ENCODE measurements at regions of chr9 and their contacts with region 1.

Region 1: GRCh38 chr9:99057665-99058625 is 47.0 kb upstream of the TGFBR1 start:
- DNase-seq: peak; percentile 84
- H3K4me3 ChIP-seq: no peak overlapping the region
- H3K27ac ChIP-seq: no peak overlapping the region
- H3K4me1 ChIP-seq: peaks cover 46% of the 10 kb centered on the region
- H3K27me3 ChIP-seq: peaks cover 2% of the 10 kb centered on the region
- CTCF ChIP-seq: no peak

Region 2: DNA sequence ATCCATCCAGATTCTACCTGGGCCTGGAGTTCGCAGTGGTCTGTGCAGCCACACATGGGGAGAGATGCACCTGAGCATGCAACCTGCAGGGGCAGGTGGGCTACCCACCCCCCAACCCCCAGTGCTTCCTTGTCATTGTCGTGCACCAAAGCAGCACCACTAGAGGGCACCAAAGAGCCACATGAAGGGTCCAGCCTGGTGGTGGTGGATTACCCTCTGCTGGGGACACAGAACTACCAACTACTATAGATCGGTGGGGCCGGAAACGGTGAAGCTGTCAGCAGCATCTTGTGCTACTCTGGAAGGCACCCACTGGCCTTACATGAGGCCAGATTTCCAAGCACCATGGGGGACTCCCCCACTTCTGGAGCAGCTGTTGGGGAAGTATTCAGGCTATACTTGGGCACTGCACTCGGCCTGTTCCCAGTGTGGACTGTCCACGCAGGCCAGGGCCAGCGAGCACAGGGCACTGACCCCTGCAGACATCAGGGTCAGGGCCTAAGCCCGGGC is 742.3 kb before region 1 on chr9:
- CTCF ChIA-PET with region 1: no interaction called
- dilution Hi-C with region 1: no loop called
- in situ Hi-C with region 1: no loop called
- intact Hi-C with region 1: no loop called
- DNase-seq: peak; percentile 60
- H3K4me3 ChIP-seq: no peak overlapping the region
- H3K27ac ChIP-seq: no peak overlapping the region
- H3K4me1 ChIP-seq: peaks cover 3% of the 10 kb centered on the region
- H3K27me3 ChIP-seq: no peaks in the 10 kb centered on the region
- CTCF ChIP-seq: peak; percentile 96 to 98

Region 3: GRCh38 chr9:99019790-99020331 is 38.1 kb before region 1 on chr9:
- CTCF ChIA-PET with region 1: no interaction called
- dilution Hi-C with region 1: no loop called
- in situ Hi-C with region 1: no loop called
- intact Hi-C with region 1: loop called (anchors 5 kb)
- DNase-seq: peak; percentile 88
- H3K4me3 ChIP-seq: no peak overlapping the region
- H3K27ac ChIP-seq: peak overlapping the region; percentile 60
- H3K4me1 ChIP-seq: peaks cover 11% of the 10 kb centered on the region
- H3K27me3 ChIP-seq: no peaks in the 10 kb centered on the region
- CTCF ChIP-seq: no peak

Region 4: DNA sequence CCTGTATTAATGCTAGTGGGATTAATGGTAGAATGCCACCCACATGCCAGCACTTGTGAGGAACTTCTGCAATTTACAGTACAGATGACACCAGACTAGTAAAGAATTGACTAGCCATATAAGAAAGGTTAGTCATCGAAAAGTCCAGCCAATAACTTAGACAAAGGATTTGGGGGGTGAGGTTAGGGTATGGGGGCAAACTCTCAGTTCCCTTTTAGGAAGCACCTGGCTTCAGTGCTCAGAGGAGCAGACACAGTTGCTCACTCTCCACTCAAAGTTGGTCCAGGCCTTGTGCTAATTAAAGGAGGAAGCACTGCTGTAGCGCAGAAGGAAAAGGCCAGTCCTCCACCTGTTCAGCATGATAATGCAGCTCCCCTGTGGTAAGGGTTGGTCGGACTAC is 72.1 kb after region 1 on chr9:
- CTCF ChIA-PET with region 1: no interaction called
- dilution Hi-C with region 1: no loop called
- in situ Hi-C with region 1: no loop called
- intact Hi-C with region 1: loop called (anchors 2 kb)
- DNase-seq: no peak
- H3K4me3 ChIP-seq: no peak overlapping the region
- H3K27ac ChIP-seq: no peak overlapping the region
- H3K4me1 ChIP-seq: peaks cover 58% of the 10 kb centered on the region
- H3K27me3 ChIP-seq: no peaks in the 10 kb centered on the region
- CTCF ChIP-seq: no peak

Region 5: GRCh38 chr9:99231711-99232110 is 173.8 kb after region 1 on chr9:
- CTCF ChIA-PET with region 1: no interaction called
- dilution Hi-C with region 1: no loop called
- in situ Hi-C with region 1: no loop called
- intact Hi-C with region 1: no loop called
- DNase-seq: no peak
- H3K4me3 ChIP-seq: no peak overlapping the region
- H3K27ac ChIP-seq: no peak overlapping the region
- H3K4me1 ChIP-seq: no peaks in the 10 kb centered on the region
- H3K27me3 ChIP-seq: no peaks in the 10 kb centered on the region
- CTCF ChIP-seq: peak; percentile 56 to 61

Measured in mammary epithelial cell (primary cell).